A549 (cell line): ENCODE measurements at regions of chr16 and their contacts with region 1.

Region 1: DNA sequence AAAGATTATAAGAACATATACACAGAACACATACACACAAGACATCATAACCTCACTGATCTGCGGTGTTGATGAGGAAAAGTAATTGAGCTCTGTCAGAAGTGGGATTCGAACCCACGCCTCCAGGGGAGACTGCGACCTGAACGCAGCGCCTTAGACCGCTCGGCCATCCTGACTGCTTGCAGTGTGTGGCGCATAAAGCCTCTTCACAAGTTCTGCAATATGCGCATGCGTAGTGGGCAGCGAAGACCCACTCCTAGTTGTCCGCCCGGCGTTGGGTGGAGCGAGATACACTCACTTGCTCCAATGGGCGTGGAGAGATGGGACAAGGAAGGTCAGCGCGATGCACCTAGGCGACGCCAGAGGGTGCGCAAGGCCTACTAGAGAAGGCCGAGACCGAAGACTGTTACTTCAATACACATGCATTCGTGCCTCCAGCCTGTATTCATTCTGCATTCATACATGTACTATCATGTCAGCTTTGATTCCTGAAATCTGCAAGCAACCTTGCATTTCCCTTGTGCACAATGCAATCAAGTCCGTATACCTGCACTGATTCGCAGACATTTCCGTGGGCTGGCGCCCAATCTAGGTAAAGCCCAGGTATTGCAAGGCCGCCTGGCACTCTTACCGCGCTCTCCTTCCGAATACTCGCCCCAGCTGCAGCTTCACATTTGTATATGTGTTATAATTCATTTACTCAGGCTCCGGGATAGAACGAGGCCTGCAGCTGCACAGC is 16.1 kb upstream of the PLLP start:
- DNase-seq: peak; percentile 93 to 99
- ATAC-seq: peak; percentile 77 to 83
- H3K4me3 ChIP-seq: peak overlapping the region; percentile 37
- H3K27ac ChIP-seq: peak overlapping the region; percentile 42 to 70; a peak in 4 of 6 replicates
- H3K4me1 ChIP-seq: peaks cover 23% of the 10 kb centered on the region
- CTCF ChIP-seq: peak; percentile 95
- EP300 ChIP-seq: no peak
- POLR2A ChIP-seq: no peak
- RAD21 ChIP-seq: peak; percentile 99 to 100

Region 2: DNA sequence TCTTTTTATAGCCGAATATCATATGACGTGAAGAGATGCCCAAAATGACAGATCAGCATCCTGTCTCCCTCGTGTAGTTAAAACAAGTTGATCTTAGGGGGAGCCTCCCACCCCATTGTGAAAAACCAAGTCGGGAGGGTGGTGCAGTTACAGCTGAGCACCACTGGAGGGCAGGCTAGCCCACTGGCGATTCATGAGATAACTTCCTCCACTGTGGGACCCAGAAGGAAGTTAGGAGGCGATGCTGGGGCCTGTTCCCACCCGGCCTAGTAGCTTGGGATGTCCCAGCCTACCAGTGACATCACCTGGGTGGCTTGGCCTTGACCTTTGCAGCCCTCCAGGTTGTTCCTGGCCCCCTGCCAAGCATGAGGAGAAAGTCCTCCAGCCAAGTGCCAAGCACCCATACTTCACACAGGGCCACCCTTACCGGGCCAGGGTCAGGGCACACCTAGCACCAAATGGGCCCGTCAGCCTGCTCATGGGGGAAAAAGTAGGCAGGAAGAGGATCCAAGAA is 216.2 kb before region 1 on chr16:
- CTCF ChIA-PET with region 1: interaction called, 15 read pairs
- POLR2A ChIA-PET with region 1: no interaction called
- DNase-seq: peak; percentile 81 to 93
- ATAC-seq: peak; percentile 67 to 87
- H3K4me3 ChIP-seq: no peak overlapping the region
- H3K27ac ChIP-seq: peak overlapping the region in 1 of 2 experiments; percentile 56; a peak in 3 of 6 replicates
- H3K4me1 ChIP-seq: no peaks in the 10 kb centered on the region
- CTCF ChIP-seq: peak; percentile 90
- EP300 ChIP-seq: no peak
- POLR2A ChIP-seq: no peak
- RAD21 ChIP-seq: peak; percentile 86 to 90

Region 3: GRCh38 chr16:57289391-57290257 is 10.9 kb before region 1 on chr16:
- CTCF ChIA-PET with region 1: interaction called, 25 read pairs
- POLR2A ChIA-PET with region 1: interaction called, 4 read pairs
- DNase-seq: no peak
- ATAC-seq: no peak; a peak in 1 of 6 replicates
- H3K4me3 ChIP-seq: no peak overlapping the region
- H3K27ac ChIP-seq: no peak overlapping the region
- H3K4me1 ChIP-seq: 0 out of 3 replicates have a peak, but pooled peaks cover 5% of the 10 kb centered on the region
- CTCF ChIP-seq: no peak
- EP300 ChIP-seq: no peak
- POLR2A ChIP-seq: no peak
- RAD21 ChIP-seq: no peak

Region 4: DNA sequence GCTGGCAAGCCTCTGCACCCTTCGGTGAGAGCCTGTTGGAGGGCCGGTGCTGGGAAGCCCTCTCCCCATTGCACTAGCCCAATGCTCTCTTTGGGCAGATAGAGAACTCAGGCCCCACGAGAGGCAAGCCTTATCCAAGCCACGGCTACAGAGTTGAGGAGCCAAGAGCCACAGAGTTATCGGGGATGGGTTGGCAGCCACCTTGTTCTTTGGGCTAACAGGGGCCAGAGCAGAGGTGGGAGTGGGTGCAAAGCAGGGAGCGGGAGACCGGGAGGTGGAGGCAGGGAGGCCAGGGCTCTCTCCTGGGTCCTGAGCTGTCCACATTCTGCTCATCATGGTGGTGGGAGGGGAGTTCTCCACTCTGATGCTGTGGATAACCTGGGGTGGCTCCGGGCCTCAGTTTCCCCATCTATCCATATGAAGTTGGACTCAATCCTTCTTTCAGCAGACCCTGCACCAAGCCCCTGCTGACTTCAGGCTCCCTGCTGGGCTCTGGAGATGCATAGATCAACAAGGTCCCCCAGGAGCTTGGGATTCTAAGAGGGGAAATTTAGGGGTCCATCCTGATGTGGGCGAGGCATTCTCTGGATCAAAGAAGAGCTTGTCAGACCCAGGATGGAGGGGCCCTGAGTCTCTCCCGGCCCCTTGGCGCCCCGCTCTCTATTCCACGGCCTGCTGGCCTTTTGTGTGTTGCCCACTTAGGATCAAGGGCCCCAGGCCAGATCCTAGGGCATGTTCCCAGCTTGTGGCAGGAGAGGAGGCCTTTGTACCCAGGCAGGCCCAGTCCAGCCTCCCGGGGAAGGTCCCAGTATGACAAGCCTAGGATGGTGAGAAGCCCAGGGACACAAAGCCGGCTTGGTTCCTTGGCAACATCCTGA is 71.2 kb after region 1 on chr16:
- CTCF ChIA-PET with region 1: interaction called, 11 read pairs
- POLR2A ChIA-PET with region 1: no interaction called
- DNase-seq: no peak
- ATAC-seq: peak in 1 of 2 experiments; percentile 8; a peak in 2 of 6 replicates
- H3K4me3 ChIP-seq: no peak overlapping the region
- H3K27ac ChIP-seq: peak overlapping the region; percentile 29 to 80; a peak in 4 of 6 replicates
- H3K4me1 ChIP-seq: peaks cover 27% of the 10 kb centered on the region
- CTCF ChIP-seq: no peak
- EP300 ChIP-seq: no peak
- POLR2A ChIP-seq: no peak
- RAD21 ChIP-seq: no peak

Region 5: GRCh38 chr16:57409870-57410585 is 109.5 kb after region 1 on chr16:
- CTCF ChIA-PET with region 1: interaction called, 709 read pairs
- POLR2A ChIA-PET with region 1: no interaction called
- DNase-seq: no peak
- ATAC-seq: no peak
- H3K4me3 ChIP-seq: no peak overlapping the region
- H3K27ac ChIP-seq: no peak overlapping the region
- H3K4me1 ChIP-seq: no peaks in the 10 kb centered on the region
- CTCF ChIP-seq: no peak
- EP300 ChIP-seq: no peak
- POLR2A ChIP-seq: no peak
- RAD21 ChIP-seq: no peak

Region 6: DNA sequence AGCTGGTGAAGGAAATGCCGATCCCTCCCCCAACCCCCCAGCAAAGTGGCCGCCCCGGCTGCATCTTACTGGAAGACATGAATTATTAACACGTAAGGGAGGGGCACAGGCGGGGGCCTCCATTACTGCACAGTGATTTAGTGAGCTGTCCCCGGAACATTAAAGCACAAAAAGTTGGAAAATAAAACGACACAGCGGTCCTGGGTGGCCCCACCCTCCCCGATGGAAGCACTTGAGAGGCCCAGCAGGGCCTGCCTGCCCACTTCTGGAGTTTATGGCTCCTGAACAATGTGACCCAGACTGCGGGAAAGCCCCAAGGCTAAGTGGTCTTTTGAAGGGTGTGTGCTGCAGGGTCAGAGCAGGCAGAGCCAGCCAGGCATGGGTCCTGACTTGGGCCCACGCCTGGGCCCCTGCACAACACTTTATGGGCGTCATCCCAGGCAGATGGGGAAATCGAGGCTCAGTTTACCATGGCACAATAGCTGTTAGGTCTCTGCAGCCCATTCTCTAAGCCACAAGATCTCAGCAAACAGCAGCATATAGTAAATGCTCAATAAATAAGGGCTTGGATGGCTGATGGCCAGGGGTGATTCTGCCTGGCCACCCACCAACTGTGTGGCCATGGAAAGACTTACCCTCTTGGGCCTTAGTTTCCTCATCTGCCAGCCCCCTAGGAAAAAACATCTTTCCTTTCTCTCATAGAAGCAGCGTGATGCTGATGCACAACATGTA is 213.0 kb after region 1 on chr16:
- CTCF ChIA-PET with region 1: interaction called, 20 read pairs
- POLR2A ChIA-PET with region 1: no interaction called
- DNase-seq: peak in 1 of 2 experiments; percentile 46
- ATAC-seq: peak in 1 of 2 experiments; percentile 38; a peak in 3 of 6 replicates
- H3K4me3 ChIP-seq: no peak overlapping the region
- H3K27ac ChIP-seq: peak overlapping the region; percentile 44 to 57; a peak in 5 of 6 replicates
- H3K4me1 ChIP-seq: peaks cover 11% of the 10 kb centered on the region
- CTCF ChIP-seq: no peak
- EP300 ChIP-seq: no peak
- POLR2A ChIP-seq: no peak
- RAD21 ChIP-seq: no peak